CD4-positive, alpha-beta memory T cell (primary cell): ENCODE measurements at regions of chr9 and their contacts with region 1.

Region 1: GRCh38 chr9:3004572-3004971 is 160.7 kb upstream of the PUM3 start:
- DNase-seq: no peak
- H3K4me3 ChIP-seq: no peak overlapping the region
- H3K4me3 Mint-ChIP-seq: no peak overlapping the region
- H3K27ac ChIP-seq: no peak overlapping the region
- H3K27ac Mint-ChIP-seq: peak overlapping the region in 1 of 7 donors; percentile 3
- H3K4me1 ChIP-seq: no peaks in the 10 kb centered on the region
- H3K4me1 Mint-ChIP-seq: no peaks in the 10 kb centered on the region
- H3K27me3 ChIP-seq: no peaks in the 10 kb centered on the region
- H3K27me3 Mint-ChIP-seq: peaks cover 0 to 2% of the 10 kb centered on the region in 2 donors

Region 2: DNA sequence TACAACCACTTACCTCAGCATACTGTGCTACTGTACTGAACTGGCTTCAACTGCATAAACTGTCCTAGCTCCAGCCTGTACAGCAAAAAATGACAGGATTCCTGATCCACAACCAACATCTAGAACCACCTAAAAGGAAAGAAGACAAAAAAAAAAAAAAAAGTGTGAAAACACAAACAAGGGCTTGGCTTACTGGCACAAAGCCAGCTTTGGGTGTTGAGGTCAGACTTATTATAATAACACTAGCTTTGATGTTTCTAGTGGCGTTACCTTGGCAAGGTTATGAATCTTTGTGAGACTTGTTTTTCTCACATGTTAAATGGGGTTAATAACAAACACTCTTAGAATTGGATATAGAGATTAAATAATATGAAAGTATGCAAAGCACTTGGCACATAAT is 12.1 kb before region 1 on chr9:
- CTCF ChIA-PET with region 1: no interaction called
- POLR2A ChIA-PET with region 1: no interaction called
- intact Hi-C with region 1: loop called (anchors 1 kb)
- DNase-seq: no peak
- H3K4me3 ChIP-seq: no peak overlapping the region
- H3K4me3 Mint-ChIP-seq: no peak overlapping the region
- H3K27ac ChIP-seq: no peak overlapping the region
- H3K27ac Mint-ChIP-seq: no peak overlapping the region
- H3K4me1 ChIP-seq: no peaks in the 10 kb centered on the region
- H3K4me1 Mint-ChIP-seq: no peaks in the 10 kb centered on the region
- H3K27me3 ChIP-seq: no peaks in the 10 kb centered on the region
- H3K27me3 Mint-ChIP-seq: no peaks in the 10 kb centered on the region